ENCODE measurements at regions of chr21 and their contacts with region 1.

Region 1: DNA sequence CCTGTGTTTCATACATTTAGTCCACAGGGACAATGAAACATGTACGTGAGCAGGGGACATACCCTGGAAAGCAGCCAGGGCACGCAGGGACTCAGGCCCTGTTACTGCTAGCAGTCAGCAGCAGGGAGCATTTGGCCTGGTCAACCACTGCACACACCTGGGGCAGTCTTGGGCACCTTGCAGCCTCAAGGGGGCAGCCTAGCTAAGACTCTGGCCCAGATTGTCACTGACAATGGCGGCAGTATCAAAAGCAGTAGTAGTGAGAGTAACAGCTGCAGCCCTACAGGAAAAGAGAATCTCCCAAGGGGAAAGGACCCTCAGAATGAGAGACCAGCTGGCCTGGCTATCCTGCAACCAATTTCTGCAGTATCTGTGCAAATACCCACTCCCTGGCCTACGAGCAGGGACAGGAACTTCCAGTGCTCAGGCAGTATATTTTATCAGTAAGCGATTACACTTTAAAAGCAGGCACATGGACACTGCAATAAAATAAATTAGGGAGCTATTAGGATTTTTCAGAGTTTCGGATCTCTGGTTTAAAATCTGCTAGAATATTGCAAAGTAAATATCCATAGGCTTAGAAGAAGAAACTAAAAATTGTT is 475.6 kb downstream of the LTN1 start:
- DNase-seq: peak; percentile 60
- ATAC-seq: peak; percentile 100
- H3K4me3 ChIP-seq: no peak overlapping the region
- H3K27ac ChIP-seq: no peak overlapping the region
- H3K4me1 ChIP-seq: no peaks in the 10 kb centered on the region
- H3K27me3 ChIP-seq: no peaks in the 10 kb centered on the region
- CTCF ChIP-seq: peak; percentile 90
- EP300 ChIP-seq: no peak
- POLR2A ChIP-seq: no peak
- RAD21 ChIP-seq: peak; percentile 72

Region 2: DNA sequence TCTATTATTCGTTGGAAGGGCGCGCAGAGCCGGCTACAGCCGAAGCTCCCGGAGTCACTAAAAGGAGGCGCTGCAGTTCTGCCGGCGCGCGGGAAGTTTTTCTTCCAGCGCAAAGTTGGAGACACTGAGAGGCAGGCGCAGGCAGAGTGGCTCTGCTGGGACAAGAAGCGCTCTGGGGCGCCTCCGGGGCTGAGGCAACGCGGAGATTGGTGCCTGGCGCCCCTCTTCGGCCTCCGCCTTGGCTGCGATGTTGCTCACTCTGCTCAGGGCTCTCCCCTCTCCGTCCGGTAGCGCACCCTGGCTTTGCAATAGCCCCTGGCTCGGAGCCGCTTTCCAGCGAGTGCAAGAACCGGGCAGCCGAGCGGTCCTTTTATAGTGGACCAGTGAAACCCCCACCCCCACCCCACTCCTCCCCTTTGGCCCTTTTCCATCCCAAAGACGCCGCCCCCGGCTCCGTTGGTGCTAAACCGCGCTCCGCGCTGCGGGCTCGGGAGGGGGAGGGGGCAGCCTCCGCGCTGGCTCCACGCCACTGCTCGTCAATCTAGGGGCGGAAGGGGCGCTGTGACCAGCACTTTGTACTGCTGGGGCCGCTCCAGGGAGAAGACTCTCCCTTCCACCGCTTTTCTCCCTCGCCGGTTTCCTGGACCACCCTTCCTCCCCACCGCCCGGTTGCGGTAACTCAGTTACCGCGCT is 1671.9 kb before region 1 on chr21 and contains the start of gene ADAMTS1:
- CTCF ChIA-PET with region 1: no interaction called
- POLR2A ChIA-PET with region 1: no interaction called
- in situ Hi-C with region 1: no loop called
- intact Hi-C with region 1: loop called (anchors 5 kb)
- DNase-seq: peak; percentile 4
- ATAC-seq: peak; percentile 84
- H3K4me3 ChIP-seq: peak within 1 kb of the TSS; percentile 33 to 59 (median 37); a peak in 5 of 6 replicates
- H3K27ac ChIP-seq: no peak within 1 kb of the TSS
- H3K4me1 ChIP-seq: 0 out of 2 replicates have a peak, but pooled peaks cover 27% of the 10 kb centered on the region
- H3K27me3 ChIP-seq: peaks cover 7 to 45% of the 10 kb centered on the region in 2 experiments; a peak in 3 of 5 replicates
- CTCF ChIP-seq: peak; percentile 13; the same call in 1 of the 2 replicates
- EP300 ChIP-seq: no peak
- POLR2A ChIP-seq: no peak
- RAD21 ChIP-seq: no peak
- total RNA-seq, gene ADAMTS1: 0.02 TPM in 1 of 2 replicates, not detected in the other

Region 3: GRCh38 chr21:28336314-28336713 is 180.8 kb before region 1 on chr21:
- CTCF ChIA-PET with region 1: no interaction called
- POLR2A ChIA-PET with region 1: no interaction called
- in situ Hi-C with region 1: no loop called
- intact Hi-C with region 1: loop called (anchors 1 kb)
- DNase-seq: peak; percentile 16
- ATAC-seq: no peak
- H3K4me3 ChIP-seq: no peak overlapping the region
- H3K27ac ChIP-seq: no peak overlapping the region
- H3K4me1 ChIP-seq: no peaks in the 10 kb centered on the region
- H3K27me3 ChIP-seq: no peaks in the 10 kb centered on the region
- CTCF ChIP-seq: peak; percentile 61
- EP300 ChIP-seq: no peak
- POLR2A ChIP-seq: no peak
- RAD21 ChIP-seq: peak; percentile 38; the same call in 1 of the 2 replicates

Region 4: GRCh38 chr21:28745131-28746016 is 228.3 kb after region 1 on chr21:
- CTCF ChIA-PET with region 1: interaction called, 42 read pairs
- POLR2A ChIA-PET with region 1: no interaction called
- in situ Hi-C with region 1: loop called (anchors 5 kb)
- intact Hi-C with region 1: loop called (anchors 1 kb)
- DNase-seq: peak; percentile 70
- ATAC-seq: peak; percentile 96
- H3K4me3 ChIP-seq: peak overlapping the region; percentile 25 to 59 (median 52); a peak in 5 of 6 replicates
- H3K27ac ChIP-seq: no peak overlapping the region
- H3K4me1 ChIP-seq: peaks cover 5% of the 10 kb centered on the region; the same call in 1 of the 2 replicates
- H3K27me3 ChIP-seq: no peaks in the 10 kb centered on the region
- CTCF ChIP-seq: peak; percentile 87
- EP300 ChIP-seq: no peak
- POLR2A ChIP-seq: no peak
- RAD21 ChIP-seq: peak; percentile 90

Region 5: GRCh38 chr21:28943631-28944030 is 426.5 kb after region 1 on chr21:
- CTCF ChIA-PET with region 1: interaction called, 5 read pairs
- POLR2A ChIA-PET with region 1: no interaction called
- in situ Hi-C with region 1: loop called (anchors 10 kb)
- intact Hi-C with region 1: loop called (anchors 1 kb)
- DNase-seq: no peak
- ATAC-seq: no peak
- H3K4me3 ChIP-seq: no peak overlapping the region
- H3K27ac ChIP-seq: no peak overlapping the region
- H3K4me1 ChIP-seq: no peaks in the 10 kb centered on the region
- H3K27me3 ChIP-seq: no peaks in the 10 kb centered on the region
- CTCF ChIP-seq: no peak
- EP300 ChIP-seq: no peak
- POLR2A ChIP-seq: no peak
- RAD21 ChIP-seq: no peak